Prostate gland (tissue), 2 donors: ENCODE measurements at regions of chr11 and their contacts with region 1.

Region 1: DNA sequence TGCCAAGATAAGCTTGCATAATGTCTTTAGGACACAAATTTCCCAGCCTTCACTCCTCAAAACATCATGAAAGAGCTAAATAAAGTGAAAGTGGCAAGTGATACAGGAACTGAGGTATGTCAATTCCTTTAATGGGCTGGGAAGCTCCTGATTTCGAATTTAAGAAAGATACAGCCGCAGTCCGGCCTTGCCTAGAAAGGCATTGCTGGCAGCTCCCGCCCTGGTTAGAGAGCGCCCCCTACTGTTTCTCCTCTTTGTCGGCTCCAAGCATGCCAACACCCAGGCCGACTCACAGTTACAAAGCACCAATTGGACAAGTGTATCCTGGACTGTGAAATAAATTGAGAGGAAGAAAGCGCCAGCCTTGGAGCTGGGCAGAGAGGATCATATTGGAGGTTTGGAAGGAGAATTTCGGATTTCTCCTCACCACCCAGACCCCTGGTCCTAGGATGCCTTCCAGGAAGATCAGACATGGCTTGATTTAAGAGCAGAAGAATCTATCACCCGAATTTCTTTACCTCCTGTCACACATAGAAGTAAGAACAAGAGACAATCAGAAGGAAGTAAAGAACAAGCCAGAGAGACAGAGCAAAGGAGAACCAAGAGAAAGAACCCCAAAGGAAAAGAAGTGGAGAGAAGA is 84.0 kb downstream of the FAM76B start:
- DNase-seq: peak; percentile 91
- H3K4me3 ChIP-seq: no peak overlapping the region
- H3K27ac ChIP-seq: peak overlapping the region; percentile 35 to 40
- H3K4me1 ChIP-seq: no peaks in the 10 kb centered on the region
- H3K27me3 ChIP-seq: no peaks in the 10 kb centered on the region
- CTCF ChIP-seq: peak; percentile 74 to 95 (median 94)
- POLR2A ChIP-seq: no peak

Region 2: DNA sequence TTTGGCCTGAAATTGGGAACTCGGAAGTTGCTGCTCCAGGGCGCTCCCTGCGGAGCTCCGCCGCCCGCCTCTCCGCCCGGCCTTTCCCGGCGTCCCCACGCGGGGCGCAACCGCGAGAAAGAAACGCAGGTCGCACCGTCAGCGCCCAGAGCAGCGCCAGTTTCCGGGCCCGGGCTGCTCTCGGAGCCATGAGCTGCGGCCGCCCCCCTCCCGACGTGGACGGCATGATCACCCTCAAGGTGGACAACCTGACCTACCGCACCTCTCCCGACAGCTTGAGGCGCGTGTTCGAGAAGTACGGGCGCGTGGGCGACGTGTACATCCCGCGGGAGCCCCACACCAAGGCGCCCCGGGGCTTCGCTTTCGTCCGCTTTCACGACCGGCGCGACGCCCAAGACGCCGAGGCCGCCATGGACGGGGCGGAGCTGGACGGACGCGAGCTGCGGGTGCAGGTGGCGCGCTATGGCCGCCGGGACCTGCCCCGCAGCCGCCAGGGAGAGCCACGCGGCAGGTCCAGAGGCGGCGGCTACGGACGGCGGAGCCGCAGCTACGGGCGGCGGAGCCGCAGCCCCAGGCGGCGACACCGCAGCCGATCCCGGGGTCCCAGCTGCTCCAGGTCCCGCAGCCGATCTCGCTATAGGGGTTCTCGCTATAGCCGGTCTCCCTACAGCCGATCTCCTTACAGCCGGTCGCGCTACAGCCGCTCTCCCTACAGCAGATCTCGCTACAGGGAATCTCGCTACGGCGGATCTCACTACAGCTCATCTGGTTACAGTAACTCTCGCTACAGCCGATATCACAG is 638.4 kb before region 1 on chr11:
- intact Hi-C with region 1: loop called (anchors 5 kb)
- DNase-seq: peak; percentile 67
- H3K4me3 ChIP-seq: peak overlapping the region; percentile 85 to 86
- H3K27ac ChIP-seq: peak overlapping the region; percentile 97 to 98
- H3K4me1 ChIP-seq: no peaks in the 10 kb centered on the region
- H3K27me3 ChIP-seq: no peaks in the 10 kb centered on the region
- CTCF ChIP-seq: peak in 3 of 4 experiments; percentile 19 to 67 (median 58)
- POLR2A ChIP-seq: peak; percentile 48

Region 3: DNA sequence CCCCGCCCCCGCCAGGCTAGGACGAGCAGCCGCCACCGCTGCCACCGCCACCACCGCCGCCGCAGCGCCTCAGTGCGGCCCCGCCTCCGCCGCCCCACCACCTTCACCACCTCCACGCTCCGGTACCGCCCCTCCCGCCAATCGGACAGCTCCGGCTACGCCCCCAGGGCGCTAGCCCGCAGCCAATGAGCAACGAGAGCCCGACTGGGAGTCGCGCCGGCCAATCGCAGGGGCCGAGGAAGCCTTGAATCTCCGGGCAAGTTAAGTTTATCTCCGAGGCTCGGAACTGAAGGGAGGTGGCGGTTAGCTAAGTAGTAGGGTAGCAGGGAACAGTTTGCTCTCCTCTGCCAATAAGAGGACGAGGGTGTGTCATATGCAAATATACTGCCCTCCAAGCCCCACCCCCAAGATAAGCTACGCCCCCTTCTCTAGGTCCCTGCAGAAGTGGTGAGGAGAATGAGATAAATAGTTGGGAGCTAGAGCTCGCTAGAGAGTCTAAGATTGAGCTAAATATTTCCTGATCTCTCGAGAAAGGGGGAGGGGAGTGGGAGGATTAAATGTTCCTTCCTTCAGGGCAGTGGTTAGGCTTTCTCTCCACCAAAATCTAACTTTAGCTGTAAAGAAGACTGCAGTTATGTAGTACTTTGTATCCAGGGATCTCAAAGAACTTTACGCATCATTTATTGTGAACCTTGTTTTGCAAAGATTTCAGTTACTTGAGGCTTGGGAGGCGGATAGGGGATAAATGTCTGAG is 474.3 kb before region 1 on chr11 and contains the start of gene SESN3:
- intact Hi-C with region 1: loop called (anchors 2 kb)
- DNase-seq: peak; percentile 99
- H3K4me3 ChIP-seq: peak within 1 kb of the TSS; percentile 82 to 90
- H3K27ac ChIP-seq: peak within 1 kb of the TSS; percentile 84 to 88
- H3K4me1 ChIP-seq: no peaks in the 10 kb centered on the region
- H3K27me3 ChIP-seq: no peaks in the 10 kb centered on the region
- CTCF ChIP-seq: peak in 2 of 4 experiments; percentile 34 to 41
- POLR2A ChIP-seq: peak; percentile 81
- total RNA-seq, gene SESN3: 21.3 to 33.8 TPM

Region 4: GRCh38 chr11:95337175-95337957 is 368.2 kb before region 1 on chr11:
- intact Hi-C with region 1: loop called (anchors 2 kb)
- DNase-seq: peak; percentile 64
- H3K4me3 ChIP-seq: no peak overlapping the region
- H3K27ac ChIP-seq: peak overlapping the region; percentile 74 to 75
- H3K4me1 ChIP-seq: peaks cover 13% of the 10 kb centered on the region
- H3K27me3 ChIP-seq: no peaks in the 10 kb centered on the region
- CTCF ChIP-seq: no peak
- POLR2A ChIP-seq: no peak

Region 5: DNA sequence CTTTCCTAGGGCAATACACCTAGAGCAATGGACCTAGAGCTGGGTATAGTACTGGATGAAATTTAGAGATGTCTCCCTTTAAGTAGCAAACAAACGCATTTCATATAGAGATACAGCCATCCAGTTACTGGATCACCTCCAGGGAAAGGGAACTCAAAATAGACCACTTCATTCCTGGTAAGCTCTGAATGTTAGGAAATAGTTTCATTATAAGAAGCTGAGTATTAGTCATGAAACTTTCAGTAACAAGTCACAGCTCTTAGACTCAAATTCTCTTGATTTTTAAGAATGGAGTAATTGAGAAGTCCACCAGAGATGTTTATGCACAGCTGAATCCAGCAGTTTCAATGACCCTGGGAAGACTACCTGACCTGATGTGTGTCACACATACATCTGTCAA is 137.9 kb before region 1 on chr11:
- intact Hi-C with region 1: loop called (anchors 10 kb)
- DNase-seq: no peak
- H3K4me3 ChIP-seq: no peak overlapping the region
- H3K27ac ChIP-seq: no peak overlapping the region
- H3K4me1 ChIP-seq: no peaks in the 10 kb centered on the region
- H3K27me3 ChIP-seq: no peaks in the 10 kb centered on the region
- CTCF ChIP-seq: no peak
- POLR2A ChIP-seq: no peak

Region 6: DNA sequence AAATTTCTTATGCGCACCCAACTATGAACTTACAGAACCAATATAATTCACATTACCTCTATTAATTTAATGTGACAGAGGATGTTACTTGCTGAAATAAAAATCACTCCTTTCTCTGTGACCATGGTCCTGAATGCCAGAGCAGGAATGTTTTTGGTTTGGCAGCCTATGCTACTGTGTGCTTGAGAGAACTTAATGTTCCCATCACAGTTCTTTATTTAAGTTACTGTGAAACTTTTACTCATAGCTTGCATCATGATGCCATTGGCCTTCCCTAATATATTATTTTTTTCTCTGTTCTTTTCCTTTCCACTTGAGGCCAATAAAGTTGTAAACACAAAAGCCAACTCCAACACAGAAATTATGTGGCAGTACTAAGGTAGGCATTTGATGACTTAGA is 58.2 kb before region 1 on chr11:
- intact Hi-C with region 1: loop called (anchors 2 kb)
- DNase-seq: peak; percentile 76
- H3K4me3 ChIP-seq: no peak overlapping the region
- H3K27ac ChIP-seq: peak overlapping the region; percentile 79 to 84
- H3K4me1 ChIP-seq: no peaks in the 10 kb centered on the region
- H3K27me3 ChIP-seq: no peaks in the 10 kb centered on the region
- CTCF ChIP-seq: no peak
- POLR2A ChIP-seq: no peak

Region 7: GRCh38 chr11:95659088-95659487 is 46.5 kb before region 1 on chr11:
- intact Hi-C with region 1: no loop called
- DNase-seq: no peak
- H3K4me3 ChIP-seq: no peak overlapping the region
- H3K27ac ChIP-seq: no peak overlapping the region
- H3K4me1 ChIP-seq: no peaks in the 10 kb centered on the region
- H3K27me3 ChIP-seq: no peaks in the 10 kb centered on the region
- CTCF ChIP-seq: no peak
- POLR2A ChIP-seq: no peak

Region 8: GRCh38 chr11:95964281-95964680 is 258.7 kb after region 1 on chr11:
- intact Hi-C with region 1: no loop called
- DNase-seq: no peak
- H3K4me3 ChIP-seq: no peak overlapping the region
- H3K27ac ChIP-seq: no peak overlapping the region
- H3K4me1 ChIP-seq: no peaks in the 10 kb centered on the region
- H3K27me3 ChIP-seq: no peaks in the 10 kb centered on the region
- CTCF ChIP-seq: no peak
- POLR2A ChIP-seq: no peak